ENCODE measurements at regions of chr1 and their contacts with region 1.

Region 1: GRCh38 chr1:167454894-167455785 is 63.2 kb downstream of the CD247 start:
- H3K4me3 Mint-ChIP-seq: peak overlapping the region; percentile 81
- H3K27ac Mint-ChIP-seq: peak overlapping the region; percentile 90
- H3K4me1 Mint-ChIP-seq: peaks cover 19% of the 10 kb centered on the region
- H3K27me3 Mint-ChIP-seq: peaks cover 17% of the 10 kb centered on the region

Region 2: GRCh38 chr1:167542109-167543032 is 87.2 kb after region 1 on chr1:
- intact Hi-C with region 1: loop called (anchors 5 kb)
- H3K4me3 Mint-ChIP-seq: peak overlapping the region; percentile 23
- H3K27ac Mint-ChIP-seq: peak overlapping the region; percentile 77
- H3K4me1 Mint-ChIP-seq: peaks cover 82% of the 10 kb centered on the region
- H3K27me3 Mint-ChIP-seq: no peaks in the 10 kb centered on the region

Region 3: GRCh38 chr1:167715157-167715999 is 260.2 kb after region 1 on chr1:
- intact Hi-C with region 1: loop called (anchors 10 kb)
- H3K4me3 Mint-ChIP-seq: peak overlapping the region; percentile 99
- H3K27ac Mint-ChIP-seq: peak overlapping the region; percentile 95
- H3K4me1 Mint-ChIP-seq: peaks cover 54% of the 10 kb centered on the region
- H3K27me3 Mint-ChIP-seq: peaks cover 22% of the 10 kb centered on the region

Region 4: DNA sequence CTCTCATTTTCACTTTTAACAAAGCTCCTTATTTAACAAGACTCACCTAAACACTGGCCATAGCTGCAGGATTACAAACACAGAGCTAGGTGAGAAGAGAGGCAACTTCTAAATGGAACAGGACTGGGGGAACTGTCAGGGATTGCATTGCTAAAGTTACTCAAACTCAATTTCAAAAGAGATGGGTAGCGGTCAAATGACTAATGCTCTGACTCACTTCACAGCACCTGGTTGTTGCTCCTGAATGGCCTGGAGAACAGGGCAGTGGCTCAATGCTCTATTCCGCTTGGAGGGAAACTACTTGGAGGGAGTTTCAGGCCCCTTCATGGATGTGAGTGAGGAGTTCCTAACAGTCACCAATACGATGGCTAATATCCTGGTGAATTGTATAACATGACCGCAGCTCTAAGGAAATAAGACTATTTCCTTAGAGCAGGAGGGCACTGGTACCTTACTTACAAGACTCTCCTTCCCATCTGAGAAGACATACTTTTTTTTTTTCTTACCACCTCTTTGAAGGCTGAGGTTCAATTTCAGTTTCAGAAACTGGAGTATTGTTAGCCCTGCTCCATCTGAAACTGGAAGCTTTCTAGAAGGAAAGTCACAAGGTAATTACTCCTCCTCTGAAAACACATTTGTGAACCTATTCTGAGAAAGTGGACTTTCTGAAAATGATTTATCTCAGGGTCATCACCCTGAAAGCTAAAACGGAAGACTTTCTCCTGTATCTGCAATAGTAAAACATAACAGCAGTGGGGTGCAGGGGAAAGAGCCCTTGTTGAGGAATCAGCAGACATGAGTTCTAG is 1264.4 kb after region 1 on chr1:
- intact Hi-C with region 1: no loop called
- H3K4me3 Mint-ChIP-seq: no peak overlapping the region
- H3K27ac Mint-ChIP-seq: no peak overlapping the region
- H3K4me1 Mint-ChIP-seq: no peaks in the 10 kb centered on the region
- H3K27me3 Mint-ChIP-seq: peaks cover 2% of the 10 kb centered on the region

Measured in dendritic cell treated with granulocyte-macrophage colony-stimulating factor and Interleukin-4, amounts not matched to agents 40 ng/mL and 50 ng/mL, for 4 days (primary cell).